ENCODE measurements at regions of chr7 and their contacts with region 1.

Region 1: DNA sequence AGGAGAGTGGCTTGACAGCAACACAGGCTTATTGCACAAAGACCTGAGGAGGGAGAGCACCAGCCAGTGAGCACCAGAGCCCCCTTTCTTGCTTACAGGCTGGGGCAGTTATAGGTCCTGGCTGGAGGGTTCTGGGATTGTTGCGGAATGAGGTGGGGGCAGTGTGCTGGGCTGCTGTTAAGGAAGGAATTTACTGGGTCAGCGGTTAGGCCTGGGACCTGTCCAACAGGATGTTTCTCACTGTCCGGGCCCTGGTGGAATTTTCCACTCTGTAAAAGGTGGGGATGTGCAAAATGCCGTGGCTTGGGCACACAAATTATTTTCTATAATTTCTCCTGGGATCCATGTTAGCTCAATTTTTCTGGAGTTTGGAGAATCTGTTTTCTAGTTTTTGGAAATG is 757.3 kb downstream of the TYW1 start:
- DNase-seq: no peak
- H3K4me3 ChIP-seq: no peak overlapping the region
- H3K4me3 Mint-ChIP-seq: no peak overlapping the region
- H3K27ac Mint-ChIP-seq: no peak overlapping the region
- H3K4me1 ChIP-seq: no peaks in the 10 kb centered on the region
- H3K4me1 Mint-ChIP-seq: no peaks in the 10 kb centered on the region
- H3K27me3 ChIP-seq: no peaks in the 10 kb centered on the region
- H3K27me3 Mint-ChIP-seq: no peaks in the 10 kb centered on the region
- CTCF ChIP-seq: no peak

Region 2: DNA sequence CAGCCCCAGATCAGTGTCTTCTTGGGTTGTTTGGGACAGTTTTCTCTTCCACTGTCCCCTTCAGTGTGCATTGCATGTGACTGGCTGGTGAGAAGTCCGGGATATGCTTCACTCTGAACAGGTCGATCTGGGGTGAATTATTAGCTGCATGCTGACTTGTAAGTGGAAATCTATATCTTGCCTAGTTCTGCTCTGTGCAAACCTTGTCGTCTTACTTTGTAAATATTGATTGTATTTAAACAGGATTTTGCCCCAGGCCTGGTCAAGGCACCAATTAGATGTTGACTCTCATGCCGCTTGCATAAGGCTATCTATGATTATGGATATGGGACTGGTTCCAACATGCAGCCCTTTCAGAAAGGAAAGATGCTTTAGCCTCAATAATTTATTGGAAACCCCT is 87.5 kb before region 1 on chr7:
- CTCF ChIA-PET with region 1: no interaction called
- POLR2A ChIA-PET with region 1: no interaction called
- intact Hi-C with region 1: no loop called
- DNase-seq: no peak
- H3K4me3 ChIP-seq: no peak overlapping the region
- H3K4me3 Mint-ChIP-seq: no peak overlapping the region
- H3K27ac Mint-ChIP-seq: no peak overlapping the region
- H3K4me1 ChIP-seq: no peaks in the 10 kb centered on the region
- H3K4me1 Mint-ChIP-seq: no peaks in the 10 kb centered on the region
- H3K27me3 ChIP-seq: no peaks in the 10 kb centered on the region
- H3K27me3 Mint-ChIP-seq: no peaks in the 10 kb centered on the region
- CTCF ChIP-seq: no peak

Region 3: DNA sequence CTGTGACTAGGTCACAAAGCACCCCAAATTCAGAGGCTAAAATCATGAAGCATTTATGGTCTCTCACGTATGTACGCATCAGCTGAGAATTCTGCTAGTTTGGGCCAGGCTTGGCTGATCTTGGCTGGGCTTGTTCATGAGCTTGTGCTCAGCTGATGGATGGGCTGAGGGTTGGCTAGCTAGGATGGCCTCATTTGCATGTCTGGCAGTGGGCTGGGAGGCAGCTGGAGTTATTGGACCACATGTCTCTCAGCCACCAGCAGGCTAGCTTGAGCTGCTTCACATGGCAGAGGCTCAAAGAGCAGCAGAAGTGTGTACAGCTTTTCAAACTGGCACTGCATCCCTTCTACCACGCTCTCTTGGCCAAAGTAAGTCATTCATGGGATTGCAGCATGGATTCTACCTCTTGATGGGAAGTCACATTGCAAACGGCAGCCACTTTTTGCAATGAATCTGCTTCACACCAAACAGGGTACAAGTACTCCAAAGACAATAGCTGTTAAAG is 13.1 kb after region 1 on chr7:
- CTCF ChIA-PET with region 1: no interaction called
- POLR2A ChIA-PET with region 1: interaction called, 10 read pairs
- intact Hi-C with region 1: no loop called
- DNase-seq: no peak
- H3K4me3 ChIP-seq: no peak overlapping the region
- H3K4me3 Mint-ChIP-seq: no peak overlapping the region
- H3K27ac Mint-ChIP-seq: no peak overlapping the region
- H3K4me1 ChIP-seq: no peaks in the 10 kb centered on the region
- H3K4me1 Mint-ChIP-seq: no peaks in the 10 kb centered on the region
- H3K27me3 ChIP-seq: no peaks in the 10 kb centered on the region
- H3K27me3 Mint-ChIP-seq: no peaks in the 10 kb centered on the region
- CTCF ChIP-seq: no peak